PC-3 (cell line): ENCODE measurements at regions of chr3 and their contacts with region 1.

Region 1: GRCh38 chr3:23959135-23959900 is 14.2 kb downstream of the NR1D2 start:
- DNase-seq: peak; percentile 96
- ATAC-seq: peak; percentile 94
- H3K4me3 ChIP-seq: peak overlapping the region; percentile 12; the same call in 1 of the 2 replicates
- H3K27ac ChIP-seq: peak overlapping the region; percentile 76
- H3K4me1 ChIP-seq: peaks cover 41% of the 10 kb centered on the region
- H3K27me3 ChIP-seq: no peaks in the 10 kb centered on the region
- CTCF ChIP-seq: no peak

Region 2: DNA sequence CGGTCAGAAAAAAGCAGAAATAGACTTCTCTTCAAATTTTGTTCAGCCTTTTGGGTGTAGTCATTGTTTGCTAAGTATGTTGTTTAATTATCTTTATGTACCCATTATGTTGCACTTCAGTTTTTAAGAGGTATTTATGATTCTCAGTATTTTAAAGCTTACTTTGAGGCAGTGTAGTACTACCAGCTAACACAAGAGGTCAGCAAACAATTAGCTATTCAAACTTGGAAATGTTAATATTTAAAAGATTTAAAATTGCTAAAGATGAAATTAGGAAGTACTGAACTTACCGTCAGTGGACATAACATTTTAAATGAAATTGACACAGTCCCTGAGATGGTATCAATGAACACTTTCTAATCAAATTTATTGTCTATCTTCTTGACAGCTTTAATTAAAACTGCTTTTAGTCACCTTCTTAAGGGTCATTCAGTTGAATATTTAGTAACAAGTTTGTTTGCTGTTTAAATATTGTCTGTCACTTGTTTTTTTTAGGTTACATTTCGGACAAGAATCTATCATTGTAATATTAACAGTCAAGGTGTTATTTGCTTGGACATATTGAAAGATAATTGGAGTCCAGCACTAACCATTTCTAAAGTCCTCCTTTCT is 70.6 kb before region 1 on chr3:
- CTCF ChIA-PET with region 1: no interaction called
- POLR2A ChIA-PET with region 1: no interaction called
- intact Hi-C with region 1: loop called (anchors 1 kb)
- DNase-seq: peak; percentile 72
- ATAC-seq: peak; percentile 28; the same call in 1 of the 2 replicates
- H3K4me3 ChIP-seq: no peak overlapping the region
- H3K27ac ChIP-seq: no peak overlapping the region
- H3K4me1 ChIP-seq: peaks cover 8% of the 10 kb centered on the region; the same call in 1 of the 2 replicates
- H3K27me3 ChIP-seq: no peaks in the 10 kb centered on the region
- CTCF ChIP-seq: peak; percentile 93

Region 3: GRCh38 chr3:23916886-23917678 is 42.2 kb before region 1 on chr3 and contains the starts of genes NKIRAS1 and RPL15:
- CTCF ChIA-PET with region 1: no interaction called
- POLR2A ChIA-PET with region 1: interaction called, 7 read pairs
- intact Hi-C with region 1: loop called (anchors 5 kb)
- DNase-seq: peak; percentile 98
- ATAC-seq: peak; percentile 91
- H3K4me3 ChIP-seq: peak within 1 kb of the TSS; percentile 91
- H3K27ac ChIP-seq: peak within 1 kb of the TSS; percentile 48
- H3K4me1 ChIP-seq: peaks cover 32% of the 10 kb centered on the region
- H3K27me3 ChIP-seq: no peaks in the 10 kb centered on the region
- CTCF ChIP-seq: no peak
- total RNA-seq, gene NKIRAS1: 12.7 and 14.9 TPM in 2 replicates
- total RNA-seq, gene RPL15: 1,500 and 1,904 TPM in 2 replicates

Region 4: GRCh38 chr3:23945903-23946751 is 13.2 kb before region 1 on chr3:
- CTCF ChIA-PET with region 1: no interaction called
- POLR2A ChIA-PET with region 1: interaction called, 6 read pairs
- intact Hi-C with region 1: loop called (anchors 1 kb)
- DNase-seq: peak; percentile 97
- ATAC-seq: peak; percentile 70
- H3K4me3 ChIP-seq: peak overlapping the region; percentile 85
- H3K27ac ChIP-seq: peak overlapping the region; percentile 70
- H3K4me1 ChIP-seq: peaks cover 34% of the 10 kb centered on the region
- H3K27me3 ChIP-seq: no peaks in the 10 kb centered on the region
- CTCF ChIP-seq: no peak